Activated CD8-positive, alpha-beta memory T cell treated with anti-CD3 and anti-CD28 coated beads, Interleukin-2, amount 10 ng/mL, durations not matched to agents 7 days and 5 days (primary cell): ENCODE measurements at regions of chr6 and their contacts with region 1.

Region 1: DNA sequence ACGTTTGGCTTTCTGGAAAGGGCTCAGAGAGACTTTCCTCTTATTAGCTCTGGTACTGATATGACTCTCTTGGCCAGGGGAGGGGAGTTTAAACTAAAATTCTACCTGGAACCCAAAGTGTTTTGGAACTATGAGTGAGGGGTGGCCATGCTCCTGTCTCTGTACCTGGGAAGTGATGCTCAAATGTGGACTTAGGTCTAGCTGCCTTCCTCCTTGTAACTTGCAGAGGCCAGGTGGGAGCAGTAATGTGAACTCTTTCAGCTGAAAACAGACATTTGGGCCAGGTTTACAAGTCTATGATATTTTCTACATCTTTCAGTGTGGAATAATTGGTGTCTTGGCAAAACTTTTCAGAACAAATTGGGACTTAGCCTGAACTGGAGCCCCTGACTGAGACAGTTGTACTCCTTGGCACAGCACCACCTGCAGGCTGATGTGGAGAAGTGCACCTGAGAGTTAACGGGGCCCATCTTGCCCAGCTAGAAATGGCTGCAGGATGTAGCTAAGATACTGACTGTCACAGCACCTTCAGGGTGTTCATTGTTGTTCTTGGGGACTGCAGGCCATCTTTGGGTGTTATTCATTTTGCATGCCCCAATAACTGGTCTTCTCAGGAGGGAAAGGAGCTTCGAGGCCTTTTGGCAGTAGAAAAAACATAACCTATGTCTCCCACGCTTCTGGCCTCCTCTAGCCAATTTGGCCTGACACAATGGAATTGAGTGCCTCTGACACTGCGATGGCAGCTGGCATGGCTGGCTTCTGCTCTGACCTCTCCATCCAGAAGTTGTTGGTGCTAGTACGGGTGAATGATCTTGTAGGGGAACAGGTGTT is 37.1 kb downstream of the CD109 start:
- DNase-seq: peak; percentile 82
- ATAC-seq: peak; percentile 80
- H3K4me3 Mint-ChIP-seq: no peak overlapping the region
- H3K27ac Mint-ChIP-seq: no peak overlapping the region
- H3K4me1 Mint-ChIP-seq: peaks cover 8% of the 10 kb centered on the region
- H3K27me3 Mint-ChIP-seq: no peaks in the 10 kb centered on the region

Region 2: DNA sequence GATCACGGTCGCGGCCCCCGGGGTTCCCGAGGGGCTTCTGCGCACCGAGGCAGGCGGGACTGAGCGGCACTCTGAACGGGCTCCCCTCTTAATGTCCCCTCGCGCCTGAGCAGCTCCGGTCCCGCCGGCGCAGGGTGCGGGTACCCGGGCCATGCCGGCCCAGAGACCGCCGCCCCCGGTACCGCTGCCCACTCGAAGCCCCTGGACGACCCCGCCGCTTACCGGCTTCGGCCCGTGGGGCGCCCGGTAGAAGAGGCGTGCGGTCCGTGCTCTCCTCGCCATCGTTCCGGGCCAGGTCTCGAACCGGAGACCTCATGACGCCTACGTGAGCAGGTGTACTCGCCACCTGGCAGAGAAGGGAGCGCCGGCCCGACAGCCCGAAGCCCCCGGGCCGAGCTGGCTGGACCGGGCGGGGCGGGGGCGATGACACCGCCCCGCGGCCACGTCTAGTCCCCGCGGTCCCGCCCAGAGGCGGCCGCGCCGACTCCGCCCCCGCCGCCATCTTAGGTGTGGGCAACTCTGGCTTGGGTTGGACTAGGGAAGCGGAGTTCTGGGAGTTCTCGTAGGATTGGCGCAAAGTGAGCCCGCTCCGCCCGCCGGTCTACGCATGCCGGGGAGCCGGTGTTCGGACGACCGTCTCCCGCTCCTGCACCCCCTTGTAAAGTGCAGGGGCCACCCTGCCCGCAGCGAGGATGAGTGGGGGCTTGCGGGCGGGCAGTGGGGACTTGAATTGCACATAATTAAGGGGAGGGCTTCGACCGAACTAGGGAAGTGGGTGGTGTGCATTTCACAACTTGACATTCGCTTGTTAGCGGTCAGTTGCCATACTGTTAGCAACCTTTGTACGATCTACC is 79.3 kb before region 1 on chr6 and contains the start of gene SLC17A5:
- CTCF ChIA-PET with region 1: interaction called, 15 read pairs
- DNase-seq: peak; percentile 94
- ATAC-seq: peak; percentile 91
- H3K4me3 Mint-ChIP-seq: peak within 1 kb of the TSS; percentile 95
- H3K27ac Mint-ChIP-seq: peak within 1 kb of the TSS; percentile 96
- H3K4me1 Mint-ChIP-seq: peaks cover 37% of the 10 kb centered on the region
- H3K27me3 Mint-ChIP-seq: no peaks in the 10 kb centered on the region
- total RNA-seq, gene SLC17A5: 3.9 to 5.6 TPM

Region 3: DNA sequence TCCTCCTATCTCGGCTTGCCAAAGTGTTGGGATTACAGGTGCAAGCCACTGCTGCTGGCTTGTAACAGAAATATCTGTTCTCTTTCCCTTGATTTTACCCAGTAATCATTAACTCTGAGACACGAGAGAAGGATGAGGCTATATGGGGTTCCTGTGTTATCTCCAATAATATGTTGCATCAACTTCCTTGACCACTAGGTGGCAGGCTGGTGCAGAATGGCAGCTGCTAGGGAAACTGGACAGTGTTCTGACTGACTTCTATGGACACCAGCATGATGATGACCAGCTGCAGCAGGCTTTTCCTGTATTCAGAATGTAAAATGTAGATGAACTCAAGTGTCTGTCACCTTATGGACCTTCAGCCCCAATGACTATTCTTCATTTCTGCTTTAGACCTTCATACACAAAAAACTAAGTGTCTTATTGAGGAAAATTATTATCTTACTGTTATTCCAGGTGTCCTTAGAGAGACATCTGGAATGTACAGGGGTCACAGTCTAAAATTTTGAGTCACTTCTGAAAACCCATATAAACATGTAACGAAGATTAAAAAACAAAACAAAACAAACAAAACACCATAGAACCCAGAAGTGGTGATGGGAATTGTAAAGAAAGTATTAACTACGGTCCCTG is 57.5 kb before region 1 on chr6:
- CTCF ChIA-PET with region 1: interaction called, 105 read pairs
- DNase-seq: peak; percentile 77
- ATAC-seq: peak; percentile 88
- H3K4me3 Mint-ChIP-seq: no peak overlapping the region
- H3K27ac Mint-ChIP-seq: no peak overlapping the region
- H3K4me1 Mint-ChIP-seq: peaks cover 2% of the 10 kb centered on the region
- H3K27me3 Mint-ChIP-seq: peaks cover 37% of the 10 kb centered on the region

Region 4: GRCh38 chr6:73710470-73710869 is 22.6 kb before region 1 on chr6:
- CTCF ChIA-PET with region 1: interaction called, 10 read pairs
- DNase-seq: no peak
- ATAC-seq: no peak
- H3K4me3 Mint-ChIP-seq: no peak overlapping the region
- H3K27ac Mint-ChIP-seq: no peak overlapping the region
- H3K4me1 Mint-ChIP-seq: peaks cover 5% of the 10 kb centered on the region
- H3K27me3 Mint-ChIP-seq: peaks cover 12% of the 10 kb centered on the region

Region 5: GRCh38 chr6:73722318-73723060 is 10.6 kb before region 1 on chr6:
- CTCF ChIA-PET with region 1: interaction called, 12 read pairs
- DNase-seq: peak; percentile 58
- ATAC-seq: peak; percentile 93
- H3K4me3 Mint-ChIP-seq: peak overlapping the region; percentile 15
- H3K27ac Mint-ChIP-seq: peak overlapping the region; percentile 60
- H3K4me1 Mint-ChIP-seq: peaks cover 20% of the 10 kb centered on the region
- H3K27me3 Mint-ChIP-seq: peaks cover 5% of the 10 kb centered on the region

Region 6: DNA sequence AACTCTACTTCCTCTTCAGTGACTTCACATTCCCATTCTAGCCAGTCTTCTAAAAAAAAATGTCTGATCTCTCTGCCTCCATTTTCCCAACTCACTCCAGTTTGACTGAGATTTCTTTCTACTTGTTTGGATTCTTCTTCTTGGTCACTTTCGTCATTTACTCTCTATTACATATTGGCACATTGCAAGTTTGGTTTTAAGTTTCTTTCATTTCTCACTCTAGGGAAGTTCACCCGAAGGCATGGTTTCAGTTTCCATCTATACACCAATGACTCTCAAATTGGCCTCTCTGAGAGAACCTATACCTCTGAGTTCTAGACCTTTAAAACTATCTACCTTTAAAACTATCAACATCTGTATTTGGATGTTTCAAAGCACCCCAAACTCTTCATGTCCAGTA is 14.2 kb after region 1 on chr6:
- CTCF ChIA-PET with region 1: interaction called, 14 read pairs
- DNase-seq: no peak
- ATAC-seq: peak; percentile 91
- H3K4me3 Mint-ChIP-seq: no peak overlapping the region
- H3K27ac Mint-ChIP-seq: no peak overlapping the region
- H3K4me1 Mint-ChIP-seq: peaks cover 1% of the 10 kb centered on the region
- H3K27me3 Mint-ChIP-seq: no peaks in the 10 kb centered on the region

Region 7: DNA sequence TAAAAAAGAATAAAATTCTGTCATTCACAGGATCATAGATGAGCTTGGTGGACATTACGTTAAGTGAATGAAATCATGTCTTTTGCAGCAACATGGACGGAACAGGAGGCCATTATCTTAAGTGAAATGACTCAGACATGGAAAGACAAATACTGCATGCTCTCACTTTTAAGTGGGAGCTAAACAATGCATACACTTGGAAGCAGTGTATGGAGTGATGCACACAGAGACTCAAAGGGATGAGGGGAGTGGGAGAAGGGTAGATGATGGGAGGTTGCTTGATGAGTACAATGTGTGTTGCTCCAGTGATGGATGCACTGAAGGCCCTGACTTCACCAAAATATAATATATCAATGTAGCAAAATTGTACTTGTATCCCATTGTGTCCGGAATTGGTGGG is 256.4 kb after region 1 on chr6:
- CTCF ChIA-PET with region 1: no interaction called
- DNase-seq: no peak
- ATAC-seq: no peak
- H3K4me3 Mint-ChIP-seq: no peak overlapping the region
- H3K27ac Mint-ChIP-seq: no peak overlapping the region
- H3K4me1 Mint-ChIP-seq: no peaks in the 10 kb centered on the region
- H3K27me3 Mint-ChIP-seq: no peaks in the 10 kb centered on the region

Region 8: DNA sequence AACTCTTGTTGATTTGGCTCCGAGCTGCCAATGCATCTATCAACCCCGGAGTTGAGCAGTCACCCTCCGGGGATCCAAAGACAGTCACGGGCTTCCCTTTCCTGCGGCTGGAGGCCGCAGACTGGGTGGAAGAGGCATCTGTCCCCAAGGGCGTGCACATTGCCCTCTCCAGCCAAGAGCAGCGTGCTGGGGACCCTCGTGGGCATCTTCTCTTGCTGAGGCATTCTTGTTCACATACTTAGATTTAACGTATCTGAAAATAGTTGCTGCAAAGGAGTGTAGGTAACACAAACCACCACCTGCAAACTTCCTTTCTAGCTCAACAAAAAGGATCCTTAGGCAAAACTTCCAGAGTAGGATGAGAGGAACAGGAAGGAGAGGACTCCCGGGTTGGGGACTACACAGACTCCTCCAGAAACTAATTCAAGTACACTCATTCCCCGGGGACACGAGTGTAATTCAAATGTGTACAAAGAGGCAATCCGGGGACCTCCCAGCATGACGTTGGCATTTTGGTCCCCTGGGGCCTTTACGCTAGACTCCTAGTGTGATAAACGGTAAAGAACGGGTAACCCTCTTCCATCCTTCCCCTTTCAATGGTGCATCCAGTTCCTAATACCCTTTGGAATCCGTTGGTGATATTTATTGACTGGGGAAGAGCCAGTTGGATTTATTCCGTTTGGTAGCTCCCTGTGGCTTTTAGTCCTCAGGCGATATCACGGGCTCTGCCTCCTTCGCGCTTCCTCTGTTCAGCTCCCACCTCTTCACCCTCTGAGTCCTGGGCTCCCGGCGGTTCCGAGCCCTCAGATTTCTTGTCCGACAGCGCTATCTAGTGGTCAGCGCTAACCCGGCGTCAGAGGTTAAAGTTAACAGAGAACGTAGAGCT is 1475.5 kb after region 1 on chr6:
- CTCF ChIA-PET with region 1: interaction called, 50 read pairs
- DNase-seq: peak; percentile 85
- ATAC-seq: peak; percentile 85
- H3K4me3 Mint-ChIP-seq: peak overlapping the region; percentile 17
- H3K27ac Mint-ChIP-seq: no peak overlapping the region
- H3K4me1 Mint-ChIP-seq: peaks cover 49% of the 10 kb centered on the region
- H3K27me3 Mint-ChIP-seq: peaks cover 77% of the 10 kb centered on the region